ENCODE measurements at regions of chr6 and their contacts with region 1.

Region 1: DNA sequence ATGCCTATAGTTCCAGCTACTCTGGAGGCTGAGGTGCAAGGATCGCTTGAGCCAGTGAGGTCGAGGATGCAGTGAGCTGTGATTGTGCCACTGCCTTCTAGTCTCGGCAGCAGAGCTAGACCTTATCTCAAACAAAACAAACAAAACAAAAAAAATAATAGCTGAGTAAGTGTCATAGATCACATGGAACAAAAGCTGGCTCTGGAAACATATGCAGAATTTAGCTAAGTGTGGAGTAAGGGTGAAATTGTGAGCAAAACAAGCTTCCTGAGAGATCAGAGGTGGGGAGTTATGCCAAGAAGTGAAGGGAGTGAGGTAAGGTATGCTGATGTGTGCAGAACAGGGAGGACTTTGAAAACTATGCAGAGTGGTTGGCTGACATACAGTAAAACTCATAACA is 18.7 kb downstream of the SGK1 start:
- DNase-seq: peak; percentile 10 to 36
- H3K4me3 ChIP-seq: no peak overlapping the region
- H3K4me3 Mint-ChIP-seq: no peak overlapping the region
- H3K27ac Mint-ChIP-seq: peak overlapping the region; percentile 43
- H3K4me1 ChIP-seq: peaks cover 8% of the 10 kb centered on the region
- H3K4me1 Mint-ChIP-seq: peaks cover 23% of the 10 kb centered on the region
- H3K27me3 ChIP-seq: no peaks in the 10 kb centered on the region
- H3K27me3 Mint-ChIP-seq: no peaks in the 10 kb centered on the region
- CTCF ChIP-seq: no peak

Region 2: DNA sequence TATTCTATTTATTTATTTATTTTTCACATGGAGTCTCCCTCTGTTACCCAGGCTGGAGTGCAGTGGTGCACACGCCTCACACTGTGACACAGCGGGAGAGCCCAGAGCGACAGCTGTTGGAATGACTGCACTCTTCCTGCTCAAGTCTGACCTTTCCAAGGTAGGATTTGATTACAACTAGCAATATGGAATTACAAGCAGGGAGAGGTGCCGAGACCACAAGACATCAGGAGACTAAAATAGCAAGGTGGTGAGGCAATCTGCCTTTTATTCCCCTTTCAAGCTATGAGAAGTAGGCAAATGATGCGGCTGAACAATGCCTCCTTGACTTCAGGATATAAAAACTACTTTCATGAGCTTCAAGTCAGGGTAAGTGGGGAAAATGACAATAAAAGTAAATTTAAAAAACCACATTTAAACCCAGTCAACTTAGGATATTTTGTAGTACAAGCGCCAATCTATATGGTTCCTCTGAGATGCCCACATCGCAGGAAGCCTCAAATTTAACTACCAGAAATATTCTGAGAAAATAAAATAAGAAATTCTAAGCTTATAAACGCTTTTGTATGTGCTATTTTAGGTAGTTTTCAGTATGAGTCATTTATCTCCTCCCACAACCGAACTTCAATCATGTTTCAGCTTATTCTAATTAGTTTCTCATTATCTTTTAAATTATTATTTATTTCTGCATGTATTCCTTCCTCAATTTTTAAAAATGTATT is 165.6 kb after region 1 on chr6:
- CTCF ChIA-PET with region 1: no interaction called
- POLR2A ChIA-PET with region 1: interaction called, 10 read pairs
- intact Hi-C with region 1: no loop called
- DNase-seq: no peak
- H3K4me3 ChIP-seq: no peak overlapping the region
- H3K4me3 Mint-ChIP-seq: no peak overlapping the region
- H3K27ac Mint-ChIP-seq: no peak overlapping the region
- H3K4me1 ChIP-seq: peaks cover 22% of the 10 kb centered on the region
- H3K4me1 Mint-ChIP-seq: peaks cover 9% of the 10 kb centered on the region
- H3K27me3 ChIP-seq: no peaks in the 10 kb centered on the region
- H3K27me3 Mint-ChIP-seq: no peaks in the 10 kb centered on the region
- CTCF ChIP-seq: no peak

Region 3: DNA sequence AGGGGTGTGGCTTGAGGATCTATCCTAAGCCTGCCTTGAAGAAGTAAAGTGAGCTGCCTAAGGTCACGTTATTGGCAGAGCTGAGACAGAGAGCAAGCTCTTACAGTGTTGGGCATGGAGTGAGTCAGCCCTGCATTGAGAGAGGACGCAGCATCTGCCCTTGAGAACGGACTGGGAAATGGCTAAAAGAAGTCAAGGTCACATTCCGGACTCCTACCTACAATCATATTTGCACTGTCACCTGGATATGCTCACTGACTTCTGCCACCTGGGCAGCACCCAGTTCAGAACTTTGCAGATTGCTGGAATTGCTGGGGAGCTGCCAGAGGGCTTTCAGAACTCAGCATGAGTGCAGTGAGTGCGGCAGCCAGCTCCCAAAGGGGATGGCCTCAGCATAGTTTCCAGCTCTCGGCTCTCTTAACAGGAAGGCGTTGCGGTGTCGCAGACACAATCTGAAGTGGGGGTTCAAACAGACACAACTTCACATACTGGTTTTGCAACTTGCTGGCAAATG is 218.0 kb after region 1 on chr6:
- CTCF ChIA-PET with region 1: no interaction called
- POLR2A ChIA-PET with region 1: no interaction called
- intact Hi-C with region 1: no loop called
- DNase-seq: no peak
- H3K4me3 ChIP-seq: no peak overlapping the region
- H3K4me3 Mint-ChIP-seq: no peak overlapping the region
- H3K27ac Mint-ChIP-seq: no peak overlapping the region
- H3K4me1 ChIP-seq: no peaks in the 10 kb centered on the region
- H3K4me1 Mint-ChIP-seq: no peaks in the 10 kb centered on the region
- H3K27me3 ChIP-seq: no peaks in the 10 kb centered on the region
- H3K27me3 Mint-ChIP-seq: no peaks in the 10 kb centered on the region
- CTCF ChIP-seq: no peak

Measured in Caco-2 (cell line).